AG04449 (cell line): ENCODE measurements at regions of chr3 and their contacts with region 1.

Region 1: DNA sequence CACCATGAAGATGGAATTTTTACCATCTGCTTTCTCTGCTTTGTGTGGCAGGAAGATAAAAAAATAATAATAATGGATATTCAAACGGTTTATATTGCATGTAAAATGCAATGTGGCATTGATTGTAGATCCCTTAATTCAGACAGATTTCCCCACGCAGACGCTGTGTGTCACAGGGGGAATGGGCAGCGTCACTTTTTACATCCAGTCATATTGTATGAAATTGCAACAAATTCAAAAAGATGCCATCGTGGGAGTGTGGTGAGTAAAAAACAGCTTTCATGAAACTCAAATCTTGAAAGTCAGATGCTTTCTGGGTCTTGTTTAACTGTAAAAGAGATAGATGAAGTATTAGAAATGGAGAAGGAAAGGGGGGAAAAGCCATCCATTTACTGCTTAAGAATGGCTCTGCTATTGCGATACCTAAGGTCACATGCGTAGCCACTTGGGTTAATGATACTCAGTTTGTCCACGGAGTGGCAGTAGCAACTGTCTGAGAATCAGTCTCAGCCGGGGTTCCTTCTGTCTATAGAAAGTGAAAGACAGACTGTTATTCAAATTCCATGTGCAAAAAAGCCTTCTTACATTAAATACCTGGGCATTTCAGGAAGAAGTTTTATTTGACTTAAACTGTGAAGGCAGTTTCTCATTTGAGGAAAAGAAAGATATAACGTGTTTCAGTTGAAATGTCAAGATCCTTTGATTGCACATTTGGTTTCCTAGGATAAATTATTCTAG is 28.5 kb downstream of the BTD start:
- DNase-seq: no peak
- H3K4me3 ChIP-seq: peak overlapping the region; percentile 46
- CTCF ChIP-seq: peak; percentile 65

Region 2: DNA sequence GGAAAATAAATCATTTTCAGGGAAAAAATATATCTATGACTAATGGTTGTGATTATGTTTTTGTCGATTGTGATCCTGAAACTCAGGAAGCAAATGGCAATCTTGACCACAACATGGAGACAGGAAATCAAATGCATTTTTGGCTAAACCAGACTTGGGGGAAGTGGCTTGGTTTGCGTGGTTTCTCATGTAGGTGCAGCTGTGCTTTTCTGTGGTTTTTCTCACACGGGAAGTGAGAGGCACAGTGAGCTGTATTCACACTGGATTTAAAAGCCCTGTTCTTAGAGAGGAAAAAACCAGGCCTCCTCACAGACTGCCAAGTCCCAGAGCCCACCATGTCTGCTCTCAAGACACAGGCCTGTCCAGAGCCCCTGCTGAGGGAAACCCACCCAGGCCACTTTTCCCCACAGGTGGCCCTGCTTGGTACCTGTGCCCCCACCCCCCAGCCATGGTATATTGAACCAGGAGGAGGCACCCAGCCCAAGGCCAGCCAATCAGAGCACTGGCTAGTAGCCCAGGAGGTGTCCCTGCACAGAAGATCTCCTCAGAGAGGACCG is 17.7 kb after region 1 on chr3:
- CTCF ChIA-PET with region 1: interaction called, 22 read pairs
- POLR2A ChIA-PET with region 1: interaction called, 29 read pairs
- DNase-seq: peak; percentile 97
- H3K4me3 ChIP-seq: peak overlapping the region; percentile 9
- CTCF ChIP-seq: no peak

Region 3: DNA sequence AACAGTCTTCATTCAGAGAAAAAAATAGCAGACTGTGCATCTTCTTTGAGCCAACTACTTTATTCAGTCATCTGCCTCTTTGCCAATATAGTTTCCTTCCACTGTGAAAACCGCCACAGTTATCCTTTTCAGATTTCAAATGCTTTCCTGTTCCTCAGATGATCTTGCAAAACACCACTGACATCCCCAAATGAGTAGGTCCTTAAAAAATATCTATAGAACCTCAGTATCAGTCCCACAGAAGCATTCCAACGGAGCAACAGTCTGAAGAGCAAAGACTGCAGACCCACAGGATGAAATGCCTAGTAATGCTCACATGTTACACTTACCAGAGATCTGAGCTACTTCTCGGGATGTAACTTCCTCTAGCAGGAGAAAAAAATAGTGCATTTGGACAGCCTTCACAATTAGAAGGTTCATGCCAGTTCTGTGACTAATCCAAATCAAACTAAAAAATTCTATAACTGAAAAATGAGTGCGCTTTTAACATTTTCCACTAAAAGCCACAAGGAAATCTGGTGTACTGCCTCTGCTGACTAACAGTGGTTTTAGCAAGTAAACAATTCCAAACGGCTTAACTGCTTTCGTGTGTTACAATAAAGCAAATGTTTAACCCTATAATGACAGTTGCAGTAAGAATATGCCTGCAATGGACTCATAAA is 167.7 kb after region 1 on chr3 and contains the start of gene ANKRD28:
- CTCF ChIA-PET with region 1: interaction called, 10 read pairs
- POLR2A ChIA-PET with region 1: interaction called, 6 read pairs
- DNase-seq: peak; percentile 92
- H3K4me3 ChIP-seq: peak within 1 kb of the TSS; percentile 74
- CTCF ChIP-seq: peak; percentile 7

Region 4: GRCh38 chr3:15805756-15806266 is 175.8 kb after region 1 on chr3:
- CTCF ChIA-PET with region 1: interaction called, 90 read pairs
- POLR2A ChIA-PET with region 1: no interaction called
- DNase-seq: peak; percentile 53
- H3K4me3 ChIP-seq: no peak overlapping the region
- CTCF ChIP-seq: no peak